Activated T-helper 2 cell treated with anti-CD3 and anti-CD28 coated beads, Interferon-gamma antibody, Interleukin-2, Interleukin-4, amounts not matched to agents 10 μg/mL and 5 μg/mL and 100 μg/mL, durations not matched to agents 14 hours and 24 hours and 36 hours (primary cell): ENCODE measurements at regions of chr22 and their contacts with region 1.

Region 1: GRCh38 chr22:23857606-23858483 is at the start of gene SLC2A11:
- DNase-seq: peak; percentile 94
- H3K4me3 Mint-ChIP-seq: peak within 1 kb of the TSS; percentile 87
- H3K27ac Mint-ChIP-seq: peak within 1 kb of the TSS; percentile 86
- H3K4me1 Mint-ChIP-seq: peaks cover 16% of the 10 kb centered on the region
- H3K27me3 Mint-ChIP-seq: peaks cover 5% of the 10 kb centered on the region
- total RNA-seq, gene SLC2A11: 9.4 and 9.6 TPM in 2 replicates

Region 2: DNA sequence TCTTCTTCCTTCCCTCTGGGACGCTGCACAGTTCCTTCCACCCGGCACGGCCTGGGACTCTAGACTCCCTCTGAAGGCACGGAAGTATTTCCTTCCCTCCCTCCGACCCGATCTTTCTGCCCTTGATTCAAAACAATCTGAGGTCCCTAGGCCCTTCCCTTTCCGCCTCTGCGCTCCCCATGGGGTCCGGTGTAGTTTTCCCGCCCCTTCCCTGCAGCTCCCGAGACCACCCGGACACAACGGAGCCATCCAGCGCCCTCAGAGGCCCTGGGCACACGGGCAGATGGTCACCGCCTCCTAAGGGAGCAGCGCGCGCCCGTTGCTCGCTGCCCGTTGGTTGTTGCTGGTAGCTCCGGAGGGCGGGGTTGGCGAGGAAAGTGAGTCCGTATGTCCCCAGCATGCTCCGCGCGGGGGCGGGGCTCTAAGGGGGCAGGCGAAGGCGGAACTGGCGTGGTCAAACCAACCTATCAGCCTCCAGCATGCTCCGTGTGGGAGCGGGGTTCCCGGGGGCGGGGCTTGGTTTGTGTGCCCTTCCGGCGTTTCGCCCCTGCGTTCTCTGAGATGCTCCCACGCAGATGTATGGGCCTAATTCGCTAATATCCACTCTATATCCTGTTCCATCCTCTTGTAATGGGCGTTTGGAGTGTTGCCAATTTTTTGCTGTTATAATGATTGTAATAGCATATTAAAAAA is 56.0 kb after region 1 on chr22:
- intact Hi-C with region 1: loop called (anchors 2 kb)
- DNase-seq: peak; percentile 100
- H3K4me3 Mint-ChIP-seq: peak overlapping the region; percentile 98
- H3K27ac Mint-ChIP-seq: peak overlapping the region; percentile 99
- H3K4me1 Mint-ChIP-seq: peaks cover 24% of the 10 kb centered on the region
- H3K27me3 Mint-ChIP-seq: peaks cover 3% of the 10 kb centered on the region